ENCODE measurements at regions of chr17 and their contacts with region 1.

Region 1: DNA sequence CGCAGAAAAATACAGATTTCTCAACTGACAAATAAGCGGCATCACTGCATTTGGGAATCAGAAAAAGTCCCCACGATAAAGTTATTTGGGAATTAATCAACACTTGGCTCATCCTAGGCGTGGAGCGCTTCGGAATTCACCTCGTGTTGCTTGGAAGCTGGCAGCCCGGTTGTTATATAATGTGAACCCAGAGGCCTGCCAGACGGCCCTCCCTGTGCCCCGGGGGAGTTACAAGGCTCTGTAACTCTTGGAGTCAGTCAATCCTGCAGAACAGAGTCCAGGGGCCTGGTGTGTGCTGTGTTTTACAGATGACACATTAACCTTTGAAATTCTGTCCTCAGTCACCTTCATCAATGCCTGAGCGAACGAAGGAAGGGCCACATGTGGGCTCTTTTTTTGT is 111.1 kb downstream of the PITPNC1 start:
- DNase-seq: no peak
- H3K4me3 ChIP-seq: no peak overlapping the region
- CTCF ChIP-seq: no peak

Region 2: DNA sequence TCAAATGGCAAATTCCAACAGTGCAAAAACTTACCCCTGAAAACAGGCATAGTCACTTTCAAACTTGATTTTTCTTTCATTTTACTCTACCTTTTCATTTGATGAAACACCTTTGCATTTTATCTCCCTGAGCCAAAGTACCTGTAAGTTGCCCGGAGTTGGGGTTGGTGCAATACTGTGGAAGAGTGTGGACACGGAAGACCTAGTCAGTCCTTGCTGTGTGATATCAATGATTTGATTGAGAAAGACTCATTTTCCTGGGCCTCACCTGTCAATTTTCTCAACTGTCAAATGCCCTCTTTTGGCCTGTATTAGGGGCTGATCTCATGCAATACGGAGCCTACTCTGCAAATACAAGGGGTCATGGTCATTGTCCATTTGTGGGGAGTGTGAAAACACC is 88.5 kb before region 1 on chr17:
- in situ Hi-C with region 1: no loop called
- DNase-seq: no peak
- H3K4me3 ChIP-seq: no peak overlapping the region
- CTCF ChIP-seq: no peak

Region 3: GRCh38 chr17:67452681-67453554 is 35.2 kb before region 1 on chr17:
- in situ Hi-C with region 1: loop called (anchors 5 kb)
- DNase-seq: no peak
- H3K4me3 ChIP-seq: no peak overlapping the region
- CTCF ChIP-seq: no peak

Region 4: GRCh38 chr17:67520252-67520906 is 32.2 kb after region 1 on chr17:
- in situ Hi-C with region 1: no loop called
- DNase-seq: no peak
- H3K4me3 ChIP-seq: no peak overlapping the region
- CTCF ChIP-seq: no peak

Region 5: GRCh38 chr17:67544364-67544955 is 56.3 kb after region 1 on chr17:
- in situ Hi-C with region 1: no loop called
- DNase-seq: no peak
- H3K4me3 ChIP-seq: no peak overlapping the region
- CTCF ChIP-seq: no peak

Measured in astrocyte of the cerebellum (primary cell).